ENCODE measurements at regions of chr9 and their contacts with region 1.

Region 1: GRCh38 chr9:76987594-76988200 is 31.8 kb upstream of the FOXB2 start:
- DNase-seq: peak; percentile 31
- H3K4me3 ChIP-seq: no peak overlapping the region
- H3K27ac ChIP-seq: no peak overlapping the region
- H3K27me3 ChIP-seq: no peaks in the 10 kb centered on the region
- CTCF ChIP-seq: peak; percentile 70

Region 2: DNA sequence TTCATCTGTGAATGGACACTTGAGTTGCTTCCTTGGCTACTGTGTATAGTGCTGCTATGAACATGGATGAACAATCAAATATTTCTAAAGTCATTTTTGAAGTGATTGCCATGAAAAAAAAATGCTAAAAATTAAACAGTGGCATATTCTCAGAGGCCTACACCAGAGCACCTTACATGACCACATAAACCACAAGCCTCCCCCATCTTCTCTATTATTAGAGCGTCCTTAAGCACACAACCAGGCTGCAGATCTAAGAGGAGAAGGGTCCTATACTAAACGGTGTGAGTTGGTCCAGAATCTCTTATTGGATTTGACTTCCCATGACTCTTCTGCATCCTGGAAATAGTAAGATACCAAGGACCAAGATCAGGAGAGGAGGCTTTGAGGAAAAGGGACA is 189.2 kb before region 1 on chr9:
- in situ Hi-C with region 1: loop called (anchors 25 kb)
- DNase-seq: no peak
- H3K4me3 ChIP-seq: no peak overlapping the region
- H3K27ac ChIP-seq: no peak overlapping the region
- H3K27me3 ChIP-seq: no peaks in the 10 kb centered on the region
- CTCF ChIP-seq: no peak

Region 3: DNA sequence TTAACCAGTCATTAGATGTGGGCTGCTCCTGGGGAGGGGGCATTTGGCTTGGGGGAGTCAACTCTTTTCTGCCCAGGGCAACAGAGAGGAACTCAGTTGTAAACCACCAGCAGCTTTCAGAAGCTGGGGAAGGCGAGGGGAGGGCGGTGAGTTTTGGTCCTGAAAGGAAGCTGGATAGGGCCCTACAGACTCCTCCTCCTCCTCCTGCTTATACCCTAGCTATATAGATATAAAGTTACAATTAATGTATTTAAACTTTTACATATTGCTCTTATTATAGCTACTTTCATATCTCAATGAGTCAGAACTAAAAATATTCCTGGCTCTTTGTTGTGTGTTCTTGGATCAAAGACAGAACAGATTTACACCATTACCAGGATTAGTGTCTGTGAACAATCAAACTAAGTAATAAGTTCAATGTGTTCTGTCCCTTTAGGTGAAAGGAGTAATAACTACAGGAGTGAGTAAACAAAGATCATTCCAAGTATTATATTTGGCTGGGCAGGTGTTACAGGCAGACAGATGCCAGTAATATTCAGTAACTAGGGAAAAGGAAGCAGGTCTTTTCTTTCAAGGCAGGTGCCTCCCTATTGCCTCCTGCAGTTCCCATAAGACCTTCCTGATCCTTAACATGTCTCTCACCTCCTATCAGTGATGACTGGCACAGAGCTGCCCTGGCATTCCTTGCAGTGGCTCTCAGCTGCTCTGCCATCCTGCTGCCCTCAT is 169.1 kb after region 1 on chr9:
- in situ Hi-C with region 1: no loop called
- DNase-seq: no peak
- H3K4me3 ChIP-seq: no peak overlapping the region
- H3K27ac ChIP-seq: no peak overlapping the region
- H3K27me3 ChIP-seq: no peaks in the 10 kb centered on the region
- CTCF ChIP-seq: no peak

Region 4: DNA sequence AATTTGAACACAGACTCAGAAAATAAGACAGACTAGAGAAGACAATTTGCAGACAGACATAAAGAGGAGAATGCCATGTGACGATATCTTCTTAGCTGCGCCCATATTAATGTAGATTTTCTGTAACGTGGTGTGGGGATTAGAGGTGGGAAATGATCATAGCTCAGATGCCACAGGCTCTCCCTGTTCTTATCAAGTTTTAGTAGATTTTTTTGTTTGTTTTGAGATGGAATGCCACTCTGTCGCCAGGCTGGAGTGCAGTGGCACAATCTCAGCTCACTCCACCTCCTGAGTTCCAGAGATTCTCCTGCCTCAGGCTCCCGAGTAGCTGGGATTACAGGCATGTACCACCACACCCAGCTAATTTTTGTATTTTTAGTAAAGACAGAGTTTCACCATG is 249.0 kb after region 1 on chr9:
- in situ Hi-C with region 1: no loop called
- DNase-seq: no peak
- H3K4me3 ChIP-seq: no peak overlapping the region
- H3K27ac ChIP-seq: no peak overlapping the region
- H3K27me3 ChIP-seq: no peaks in the 10 kb centered on the region
- CTCF ChIP-seq: no peak

Measured in brain microvascular endothelial cell (primary cell).